ENCODE measurements at regions of chrX and their contacts with region 1.

Region 1: GRCh38 chrX:2500267-2501075 is at the starts of genes DHRSX and ZBED1:
- DNase-seq: peak; percentile 43
- H3K4me3 ChIP-seq: peak within 1 kb of the TSS; percentile 86
- H3K27ac ChIP-seq: peak within 1 kb of the TSS; percentile 96
- H3K4me1 ChIP-seq: peaks cover 10% of the 10 kb centered on the region
- H3K27me3 ChIP-seq: no peaks in the 10 kb centered on the region
- CTCF ChIP-seq: no peak
- total RNA-seq, gene DHRSX: 28.6 to 43.3 TPM
- total RNA-seq, gene ZBED1: 33.3 to 44.6 TPM

Region 2: GRCh38 chrX:2410279-2411020 is 90.0 kb before region 1 on chrX:
- intact Hi-C with region 1: loop called (anchors 5 kb)
- DNase-seq: peak; percentile 76
- H3K4me3 ChIP-seq: no peak overlapping the region
- H3K27ac ChIP-seq: peak overlapping the region; percentile 53
- H3K4me1 ChIP-seq: no peaks in the 10 kb centered on the region
- H3K27me3 ChIP-seq: no peaks in the 10 kb centered on the region
- CTCF ChIP-seq: no peak

Region 3: DNA sequence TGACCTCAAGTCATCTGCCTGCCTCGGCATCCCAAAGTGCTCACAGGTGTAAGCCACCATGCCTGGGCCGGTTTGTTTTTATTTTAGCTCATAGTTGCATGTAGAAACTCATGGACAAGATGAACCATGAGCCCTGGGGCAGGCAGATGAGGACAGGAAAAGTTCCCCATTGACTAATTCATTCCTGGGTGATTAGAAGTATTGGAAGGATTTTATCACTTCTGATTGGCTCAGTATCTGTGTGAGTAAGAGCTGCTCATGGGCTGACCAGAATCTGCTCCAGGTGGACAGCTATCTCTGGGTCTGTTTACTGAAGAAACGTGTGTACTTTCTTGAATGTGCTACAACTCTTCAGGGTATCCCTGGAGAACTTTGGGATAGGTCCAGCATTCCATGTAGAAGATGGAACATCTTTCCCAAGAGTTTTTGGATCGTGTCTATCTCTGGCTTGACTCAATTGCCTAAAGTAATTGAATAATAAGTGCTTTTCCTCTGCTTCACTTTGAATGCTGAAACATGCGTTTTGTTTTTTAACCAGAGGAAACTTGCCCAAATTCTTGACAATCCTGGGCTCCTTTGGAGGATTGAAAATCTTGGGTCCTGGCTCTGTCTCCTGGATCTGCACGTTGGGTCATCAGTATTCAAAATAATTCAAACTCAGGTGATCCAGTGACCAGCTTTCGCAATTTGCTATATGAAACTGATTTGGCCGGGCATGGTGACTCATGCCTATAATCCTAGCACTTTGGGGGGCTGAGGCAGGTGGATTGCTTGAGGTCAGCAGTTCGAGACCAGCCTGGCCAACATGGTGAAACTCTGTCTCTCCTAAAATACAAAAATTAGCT is 88.9 kb after region 1 on chrX:
- intact Hi-C with region 1: no loop called
- DNase-seq: no peak
- H3K4me3 ChIP-seq: no peak overlapping the region
- H3K27ac ChIP-seq: no peak overlapping the region
- H3K4me1 ChIP-seq: no peaks in the 10 kb centered on the region
- H3K27me3 ChIP-seq: no peaks in the 10 kb centered on the region
- CTCF ChIP-seq: no peak

Region 4: GRCh38 chrX:2614911-2615310 is 114.4 kb after region 1 on chrX:
- intact Hi-C with region 1: loop called (anchors 10 kb)
- DNase-seq: no peak
- H3K4me3 ChIP-seq: no peak overlapping the region
- H3K27ac ChIP-seq: no peak overlapping the region
- H3K4me1 ChIP-seq: peaks cover 3% of the 10 kb centered on the region
- H3K27me3 ChIP-seq: no peaks in the 10 kb centered on the region
- CTCF ChIP-seq: no peak